ENCODE measurements at regions of chr11 and their contacts with region 1.

Region 1: GRCh38 chr11:65615229-65615941 is at the start of gene PCNX3:
- DNase-seq: peak; percentile 100
- H3K4me3 Mint-ChIP-seq: peak within 1 kb of the TSS; percentile 98
- H3K27ac Mint-ChIP-seq: peak within 1 kb of the TSS; percentile 95
- H3K4me1 Mint-ChIP-seq: peaks cover 44% of the 10 kb centered on the region
- H3K27me3 Mint-ChIP-seq: no peaks in the 10 kb centered on the region
- total RNA-seq, gene PCNX3: 39.8 to 40.3 TPM

Region 2: GRCh38 chr11:65540297-65541092 is 74.9 kb before region 1 on chr11:
- CTCF ChIA-PET with region 1: interaction called, 14 read pairs
- POLR2A ChIA-PET with region 1: interaction called, 10 read pairs
- DNase-seq: peak; percentile 92
- H3K4me3 Mint-ChIP-seq: peak overlapping the region; percentile 80
- H3K27ac Mint-ChIP-seq: peak overlapping the region; percentile 74
- H3K4me1 Mint-ChIP-seq: peaks cover 30% of the 10 kb centered on the region
- H3K27me3 Mint-ChIP-seq: no peaks in the 10 kb centered on the region

Region 3: DNA sequence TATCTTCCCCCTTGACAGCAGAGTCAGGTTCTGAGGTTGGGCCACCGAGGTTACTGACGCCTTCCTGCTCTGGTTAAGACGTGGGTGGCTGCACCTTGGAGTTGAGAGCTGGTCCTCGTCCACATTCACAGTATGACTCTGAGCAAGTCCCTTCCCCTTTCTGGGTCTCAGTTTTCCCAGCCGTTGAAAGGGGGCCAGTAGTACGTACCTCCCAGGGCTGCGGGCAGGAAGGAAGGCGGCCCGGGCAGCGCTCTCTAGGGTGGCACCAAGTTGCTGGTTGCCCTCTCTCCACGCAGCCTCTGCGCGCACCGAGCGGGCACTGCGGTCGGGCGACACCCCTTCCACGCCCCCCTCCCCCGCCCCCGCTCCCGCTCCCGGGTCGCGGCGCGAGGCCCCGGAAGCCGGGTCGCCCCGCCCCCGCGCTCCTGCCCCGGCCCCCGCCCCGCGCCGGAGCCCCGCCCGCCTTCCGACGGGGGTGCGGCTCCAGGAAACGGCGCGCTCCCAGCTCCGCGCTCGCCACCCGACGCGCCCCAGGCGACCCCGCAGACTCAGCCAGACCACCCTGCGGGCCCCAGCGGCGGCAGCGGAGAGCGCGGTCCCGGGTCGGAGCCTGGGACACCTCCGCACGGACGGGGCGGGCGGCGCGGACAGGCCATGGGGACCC is 39.7 kb before region 1 on chr11 and contains the start of gene EHBP1L1:
- CTCF ChIA-PET with region 1: interaction called, 22 read pairs
- POLR2A ChIA-PET with region 1: interaction called, 40 read pairs
- DNase-seq: peak; percentile 87
- H3K4me3 Mint-ChIP-seq: peak within 1 kb of the TSS; percentile 88
- H3K27ac Mint-ChIP-seq: peak within 1 kb of the TSS; percentile 97
- H3K4me1 Mint-ChIP-seq: peaks cover 57% of the 10 kb centered on the region
- H3K27me3 Mint-ChIP-seq: no peaks in the 10 kb centered on the region
- total RNA-seq, gene EHBP1L1: 118 to 119 TPM

Region 4: GRCh38 chr11:65593518-65594298 is 21.7 kb before region 1 on chr11:
- CTCF ChIA-PET with region 1: interaction called, 12 read pairs
- POLR2A ChIA-PET with region 1: interaction called, 42 read pairs
- DNase-seq: no peak
- H3K4me3 Mint-ChIP-seq: no peak overlapping the region
- H3K27ac Mint-ChIP-seq: peak overlapping the region; percentile 29
- H3K4me1 Mint-ChIP-seq: peaks cover 34% of the 10 kb centered on the region
- H3K27me3 Mint-ChIP-seq: no peaks in the 10 kb centered on the region

Region 5: GRCh38 chr11:65637794-65638317 is 22.5 kb after region 1 on chr11 and contains the start of gene SIPA1:
- CTCF ChIA-PET with region 1: interaction called, 9 read pairs
- POLR2A ChIA-PET with region 1: interaction called, 82 read pairs
- DNase-seq: peak; percentile 69
- H3K4me3 Mint-ChIP-seq: peak within 1 kb of the TSS; percentile 95
- H3K27ac Mint-ChIP-seq: peak within 1 kb of the TSS; percentile 97
- H3K4me1 Mint-ChIP-seq: peaks cover 64% of the 10 kb centered on the region
- H3K27me3 Mint-ChIP-seq: no peaks in the 10 kb centered on the region
- total RNA-seq, gene SIPA1: 201 to 205 TPM

Region 6: DNA sequence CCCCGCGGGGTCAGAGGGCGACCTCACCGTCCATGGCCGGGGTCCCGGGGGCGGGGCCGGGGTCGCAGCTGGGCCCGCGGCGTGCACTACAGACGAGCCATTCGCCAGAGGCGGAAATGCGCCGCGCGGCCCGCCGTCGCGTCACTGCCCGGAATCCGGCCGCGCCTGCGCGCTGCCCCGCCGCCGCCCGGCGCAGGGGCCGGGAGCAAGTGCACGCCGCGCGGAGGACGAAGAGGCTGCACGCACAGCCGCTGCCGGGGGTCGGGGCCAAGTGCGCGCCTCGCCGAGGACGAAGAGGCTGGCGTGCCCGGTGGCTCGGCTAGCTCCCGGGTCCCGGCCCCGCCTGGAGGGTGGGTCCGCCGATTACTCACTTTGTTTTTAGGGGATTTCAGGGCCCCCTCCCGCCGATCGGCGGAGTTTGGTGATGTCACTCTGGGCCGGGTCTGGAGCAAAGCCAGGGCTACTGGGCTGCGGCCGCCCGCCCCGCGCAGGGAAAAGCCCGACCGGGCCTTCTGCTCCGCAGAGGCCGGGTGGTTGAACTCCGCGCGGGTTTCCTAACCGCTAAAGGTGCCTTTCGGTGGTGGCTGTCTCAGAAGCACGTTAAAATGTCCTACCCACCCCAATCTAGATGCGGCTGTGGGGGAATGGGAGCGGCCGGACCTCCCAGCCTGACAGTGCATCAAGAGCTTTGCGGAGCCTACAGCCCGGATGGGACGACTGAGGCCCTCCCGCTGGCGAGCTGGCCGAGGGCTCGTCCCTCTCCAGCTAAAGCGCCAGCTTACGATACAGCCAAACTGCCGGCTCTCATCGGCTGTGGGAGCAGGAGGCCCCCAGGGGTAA is 47.6 kb after region 1 on chr11 and contains the start of gene RELA:
- CTCF ChIA-PET with region 1: no interaction called
- POLR2A ChIA-PET with region 1: interaction called, 14 read pairs
- DNase-seq: peak; percentile 91
- H3K4me3 Mint-ChIP-seq: peak within 1 kb of the TSS; percentile 89
- H3K27ac Mint-ChIP-seq: peak within 1 kb of the TSS; percentile 93
- H3K4me1 Mint-ChIP-seq: peaks cover 37% of the 10 kb centered on the region
- H3K27me3 Mint-ChIP-seq: no peaks in the 10 kb centered on the region
- total RNA-seq, gene RELA: 91.2 to 102 TPM

Region 7: GRCh38 chr11:65680192-65680743 is 64.9 kb after region 1 on chr11:
- CTCF ChIA-PET with region 1: no interaction called
- POLR2A ChIA-PET with region 1: no interaction called
- DNase-seq: no peak
- H3K4me3 Mint-ChIP-seq: no peak overlapping the region
- H3K27ac Mint-ChIP-seq: no peak overlapping the region
- H3K4me1 Mint-ChIP-seq: peaks cover 3% of the 10 kb centered on the region
- H3K27me3 Mint-ChIP-seq: peaks cover 10% of the 10 kb centered on the region

Region 8: DNA sequence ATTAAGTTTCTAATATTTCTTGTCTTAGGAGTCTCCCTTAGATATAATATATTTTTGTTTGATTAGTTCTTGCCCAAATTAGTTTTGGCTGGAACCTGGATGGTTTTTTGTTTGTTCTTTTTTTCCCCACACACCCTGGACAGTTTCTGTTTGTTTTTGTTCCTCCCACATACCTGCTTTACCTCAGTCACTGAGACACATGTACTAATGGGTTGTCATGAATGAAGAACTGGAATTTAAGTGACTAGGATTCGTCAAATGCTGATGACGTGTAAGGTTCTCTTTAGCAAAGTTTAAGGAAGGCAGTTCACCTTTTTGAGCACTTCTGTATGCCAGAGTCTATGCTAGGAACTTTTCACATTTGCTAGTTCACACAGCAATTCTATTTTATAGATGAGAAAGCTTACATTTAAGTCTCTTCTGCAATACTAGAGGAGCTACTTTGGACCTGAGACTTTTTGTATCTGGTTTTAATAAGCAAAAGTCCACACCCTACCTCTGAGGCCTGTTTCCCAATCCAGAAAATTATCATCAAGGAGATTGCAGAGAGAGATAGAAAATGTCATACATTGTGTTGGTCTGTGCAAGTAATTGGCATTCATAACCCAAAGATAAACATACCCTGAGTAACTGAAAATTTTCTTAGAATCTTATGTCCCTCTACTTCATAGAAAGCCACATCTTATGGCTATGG is 566.4 kb after region 1 on chr11:
- CTCF ChIA-PET with region 1: no interaction called
- POLR2A ChIA-PET with region 1: no interaction called
- DNase-seq: no peak
- H3K4me3 Mint-ChIP-seq: no peak overlapping the region
- H3K27ac Mint-ChIP-seq: no peak overlapping the region
- H3K4me1 Mint-ChIP-seq: peaks cover 1% of the 10 kb centered on the region
- H3K27me3 Mint-ChIP-seq: no peaks in the 10 kb centered on the region